ENCODE measurements at regions of chr9 and their contacts with region 1.

Region 1: DNA sequence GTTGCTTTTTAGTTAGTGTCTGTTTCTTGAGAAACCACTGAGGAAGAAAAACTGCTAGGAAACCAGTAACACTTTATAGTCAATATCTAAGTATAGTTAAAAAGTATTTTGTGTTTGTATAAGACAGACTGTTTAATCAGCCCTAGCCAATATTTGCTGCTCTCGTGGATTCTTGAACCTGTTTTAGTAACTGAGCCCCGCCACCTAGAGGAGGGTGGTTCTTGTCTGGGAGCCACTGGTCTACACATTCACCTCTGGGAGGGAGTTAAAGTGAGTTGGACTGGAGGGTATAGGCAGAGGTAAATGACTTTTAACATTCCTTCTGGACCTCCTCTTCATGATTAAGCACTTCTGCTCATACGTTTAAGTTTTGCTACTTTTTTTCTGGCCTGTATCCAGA is 117.2 kb downstream of the SPATA31D1 start:
- DNase-seq: no peak
- ATAC-seq: no peak
- H3K4me3 ChIP-seq: no peak overlapping the region
- H3K27ac ChIP-seq: no peak overlapping the region
- H3K4me1 ChIP-seq: no peaks in the 10 kb centered on the region
- H3K27me3 ChIP-seq: no peaks in the 10 kb centered on the region
- CTCF ChIP-seq: no peak

Region 2: GRCh38 chr9:81814401-81815166 is 291.1 kb before region 1 on chr9:
- CTCF ChIA-PET with region 1: no interaction called
- POLR2A ChIA-PET with region 1: no interaction called
- in situ Hi-C with region 1: no loop called
- intact Hi-C with region 1: no loop called
- DNase-seq: no peak
- ATAC-seq: no peak
- H3K4me3 ChIP-seq: no peak overlapping the region
- H3K27ac ChIP-seq: no peak overlapping the region
- H3K4me1 ChIP-seq: no peaks in the 10 kb centered on the region
- H3K27me3 ChIP-seq: no peaks in the 10 kb centered on the region
- CTCF ChIP-seq: no peak

Region 3: GRCh38 chr9:82031322-82032280 is 74.1 kb before region 1 on chr9:
- CTCF ChIA-PET with region 1: no interaction called
- POLR2A ChIA-PET with region 1: no interaction called
- in situ Hi-C with region 1: no loop called
- intact Hi-C with region 1: loop called (anchors 2 kb)
- DNase-seq: no peak
- ATAC-seq: no peak
- H3K4me3 ChIP-seq: no peak overlapping the region
- H3K27ac ChIP-seq: no peak overlapping the region
- H3K4me1 ChIP-seq: no peaks in the 10 kb centered on the region
- H3K27me3 ChIP-seq: no peaks in the 10 kb centered on the region
- CTCF ChIP-seq: no peak